ENCODE measurements at regions of chr9 and their contacts with region 1.

Region 1: DNA sequence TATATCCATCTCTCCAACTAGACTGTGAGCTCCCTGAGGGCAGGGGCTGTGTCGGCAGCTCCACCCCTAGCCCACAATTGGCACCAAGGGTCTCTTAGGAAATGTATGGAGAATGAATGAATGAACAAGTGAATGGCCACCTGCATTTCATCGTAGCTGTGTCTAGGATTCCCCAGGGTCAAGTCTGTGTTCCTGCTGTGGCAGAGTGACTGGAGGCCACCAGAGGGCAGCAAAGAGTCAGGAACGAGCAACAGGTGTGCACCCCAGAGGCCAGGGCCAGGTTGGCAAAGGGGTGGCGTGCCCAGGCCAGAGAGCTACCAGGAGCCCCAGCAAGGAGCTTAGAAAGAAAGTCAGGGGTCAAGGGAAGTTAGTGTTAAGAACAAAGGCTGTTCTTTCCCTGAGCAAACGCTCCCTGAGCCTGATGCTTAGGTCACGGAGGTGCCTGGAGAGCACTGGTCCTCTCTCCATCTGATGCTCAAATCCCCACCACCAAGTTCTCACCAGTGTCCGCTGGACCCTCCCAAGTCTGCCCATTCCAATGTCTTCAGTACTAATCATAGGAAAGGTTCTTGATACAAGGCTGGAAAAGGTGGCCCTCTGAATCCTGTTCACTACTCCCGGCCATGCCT is 160.7 kb downstream of the PAX5 start:
- DNase-seq: no peak
- H3K4me3 ChIP-seq: no peak overlapping the region
- H3K27ac ChIP-seq: no peak overlapping the region
- H3K27me3 ChIP-seq: peaks cover 21% of the 10 kb centered on the region
- CTCF ChIP-seq: peak; percentile 88

Region 2: GRCh38 chr9:36690412-36691168 is 182.8 kb before region 1 on chr9:
- CTCF ChIA-PET with region 1: no interaction called
- POLR2A ChIA-PET with region 1: no interaction called
- DNase-seq: no peak
- H3K4me3 ChIP-seq: no peak overlapping the region
- H3K27ac ChIP-seq: no peak overlapping the region
- H3K27me3 ChIP-seq: peaks cover 2% of the 10 kb centered on the region
- CTCF ChIP-seq: no peak

Region 3: DNA sequence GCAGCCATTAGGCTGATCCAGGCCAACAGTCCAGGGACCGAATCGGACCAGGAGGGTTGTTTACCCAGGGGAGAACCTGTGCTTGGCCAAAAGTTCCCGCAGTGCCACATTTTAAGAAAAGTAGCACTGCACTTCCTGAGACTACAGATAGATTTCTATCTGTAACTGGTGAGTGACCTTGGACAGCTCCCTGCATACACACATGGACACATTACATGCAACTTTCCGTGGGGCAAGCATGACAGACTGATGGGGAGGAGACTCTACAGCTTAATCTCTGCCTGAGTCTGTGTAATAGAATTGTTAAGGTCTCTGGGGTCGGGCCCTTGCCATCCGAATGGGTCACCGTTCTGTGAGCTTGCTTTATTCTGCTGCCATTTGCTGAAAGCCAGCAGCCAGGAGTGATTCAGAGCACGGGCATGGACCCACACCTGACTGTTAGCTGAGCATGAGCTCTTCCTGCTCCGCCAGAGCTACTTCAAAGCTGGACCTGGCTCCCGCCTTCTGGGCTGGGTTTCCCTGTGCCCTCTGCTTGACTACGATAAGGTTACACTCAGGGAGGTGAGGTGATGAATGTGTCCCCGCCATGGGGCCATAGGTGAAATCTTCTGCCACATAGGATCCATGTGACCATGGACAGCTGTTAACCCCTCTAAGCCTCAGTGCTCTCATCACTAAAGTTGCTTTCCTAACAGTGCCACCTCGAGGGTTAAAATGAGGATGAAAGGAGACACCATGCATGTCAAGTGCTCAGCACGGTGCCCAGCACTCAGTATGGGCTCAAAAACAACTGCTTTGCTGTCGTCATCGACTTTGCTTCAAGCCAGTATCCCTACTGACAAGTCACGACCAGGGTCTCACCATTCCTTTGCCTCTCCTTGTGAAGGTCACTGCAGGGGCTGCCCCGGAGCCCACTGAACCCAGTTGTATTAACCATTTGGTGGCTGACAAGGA is 100.6 kb before region 1 on chr9:
- CTCF ChIA-PET with region 1: no interaction called
- POLR2A ChIA-PET with region 1: no interaction called
- DNase-seq: no peak
- H3K4me3 ChIP-seq: no peak overlapping the region
- H3K27ac ChIP-seq: no peak overlapping the region
- H3K27me3 ChIP-seq: peaks cover 13% of the 10 kb centered on the region
- CTCF ChIP-seq: no peak

Region 4: DNA sequence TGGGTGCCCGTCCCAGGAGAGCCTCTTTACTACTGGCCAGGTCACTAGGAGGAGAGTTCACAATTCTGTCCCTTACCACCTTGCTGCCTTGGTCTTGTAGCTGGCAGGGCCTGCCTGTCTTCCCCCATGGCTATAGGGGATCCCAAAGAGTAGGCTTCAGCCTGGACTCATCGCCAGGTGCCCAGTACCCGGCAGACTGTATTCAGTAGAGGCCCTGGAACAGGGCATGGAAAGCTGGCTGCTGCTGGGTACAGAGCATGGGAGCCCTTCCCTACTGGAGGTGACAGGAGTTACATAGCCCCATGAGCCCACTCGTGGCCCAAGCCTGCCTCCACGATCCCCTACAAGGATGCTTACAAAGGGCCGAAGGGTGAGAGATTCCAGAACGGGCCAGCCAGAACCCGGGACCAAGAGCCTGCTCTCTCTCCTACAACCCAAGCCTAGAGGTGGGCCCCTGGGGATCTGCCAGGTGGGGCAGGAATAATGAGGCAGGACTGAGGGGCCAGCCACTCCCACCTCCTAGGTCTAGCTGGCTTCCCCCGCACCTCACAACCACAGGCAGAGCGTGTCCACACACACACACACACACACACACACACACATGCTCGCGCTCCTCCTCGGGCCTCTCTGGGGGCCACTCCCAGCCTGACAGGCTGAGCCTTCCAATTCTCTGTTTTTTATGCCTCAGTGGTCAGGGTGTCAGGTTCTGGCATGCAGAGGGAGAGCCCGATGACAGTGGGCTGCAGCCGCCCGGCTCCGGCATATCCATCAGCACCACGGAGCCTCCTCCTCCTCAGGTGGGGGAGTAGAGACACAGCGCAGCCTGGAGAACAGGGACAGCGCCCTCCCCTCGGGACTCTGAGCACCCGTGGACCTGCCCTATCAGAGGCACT is 25.3 kb before region 1 on chr9:
- CTCF ChIA-PET with region 1: no interaction called
- POLR2A ChIA-PET with region 1: no interaction called
- DNase-seq: no peak
- H3K4me3 ChIP-seq: no peak overlapping the region
- H3K27ac ChIP-seq: no peak overlapping the region
- H3K27me3 ChIP-seq: peaks cover 28% of the 10 kb centered on the region
- CTCF ChIP-seq: no peak

Region 5: GRCh38 chr9:36862206-36863145 is 10.9 kb before region 1 on chr9:
- CTCF ChIA-PET with region 1: interaction called, 26 read pairs
- POLR2A ChIA-PET with region 1: no interaction called
- DNase-seq: no peak
- H3K4me3 ChIP-seq: no peak overlapping the region
- H3K27ac ChIP-seq: no peak overlapping the region
- H3K27me3 ChIP-seq: peaks cover 51% of the 10 kb centered on the region
- CTCF ChIP-seq: peak; percentile 80

Region 6: DNA sequence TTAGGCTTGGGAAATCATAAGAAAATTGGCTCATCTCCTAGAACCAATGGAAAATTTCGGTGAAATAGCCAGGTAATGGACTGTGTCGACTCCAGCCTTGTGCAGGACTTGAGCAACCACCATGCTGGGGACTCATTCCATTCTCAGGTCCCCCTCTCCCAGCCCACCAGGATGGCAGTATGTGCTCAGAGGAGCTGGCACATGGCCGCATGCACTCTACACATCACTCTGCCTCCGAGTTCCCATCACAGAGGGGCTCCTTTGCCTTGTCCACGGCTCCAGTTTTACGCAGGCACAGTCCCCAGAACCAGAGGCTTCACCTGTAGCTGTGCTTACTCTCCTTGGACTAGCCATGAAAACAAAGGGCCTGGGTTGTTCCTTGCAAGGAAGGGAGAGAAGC is 11.4 kb after region 1 on chr9:
- CTCF ChIA-PET with region 1: interaction called, 10 read pairs
- POLR2A ChIA-PET with region 1: no interaction called
- DNase-seq: no peak
- H3K4me3 ChIP-seq: no peak overlapping the region
- H3K27ac ChIP-seq: no peak overlapping the region
- H3K27me3 ChIP-seq: peaks cover 33% of the 10 kb centered on the region
- CTCF ChIP-seq: no peak

Region 7: GRCh38 chr9:36891341-36891959 is 18.1 kb after region 1 on chr9:
- CTCF ChIA-PET with region 1: interaction called, 11 read pairs
- POLR2A ChIA-PET with region 1: no interaction called
- DNase-seq: no peak
- H3K4me3 ChIP-seq: no peak overlapping the region
- H3K27ac ChIP-seq: no peak overlapping the region
- H3K27me3 ChIP-seq: peaks cover 29% of the 10 kb centered on the region
- CTCF ChIP-seq: no peak

Region 8: DNA sequence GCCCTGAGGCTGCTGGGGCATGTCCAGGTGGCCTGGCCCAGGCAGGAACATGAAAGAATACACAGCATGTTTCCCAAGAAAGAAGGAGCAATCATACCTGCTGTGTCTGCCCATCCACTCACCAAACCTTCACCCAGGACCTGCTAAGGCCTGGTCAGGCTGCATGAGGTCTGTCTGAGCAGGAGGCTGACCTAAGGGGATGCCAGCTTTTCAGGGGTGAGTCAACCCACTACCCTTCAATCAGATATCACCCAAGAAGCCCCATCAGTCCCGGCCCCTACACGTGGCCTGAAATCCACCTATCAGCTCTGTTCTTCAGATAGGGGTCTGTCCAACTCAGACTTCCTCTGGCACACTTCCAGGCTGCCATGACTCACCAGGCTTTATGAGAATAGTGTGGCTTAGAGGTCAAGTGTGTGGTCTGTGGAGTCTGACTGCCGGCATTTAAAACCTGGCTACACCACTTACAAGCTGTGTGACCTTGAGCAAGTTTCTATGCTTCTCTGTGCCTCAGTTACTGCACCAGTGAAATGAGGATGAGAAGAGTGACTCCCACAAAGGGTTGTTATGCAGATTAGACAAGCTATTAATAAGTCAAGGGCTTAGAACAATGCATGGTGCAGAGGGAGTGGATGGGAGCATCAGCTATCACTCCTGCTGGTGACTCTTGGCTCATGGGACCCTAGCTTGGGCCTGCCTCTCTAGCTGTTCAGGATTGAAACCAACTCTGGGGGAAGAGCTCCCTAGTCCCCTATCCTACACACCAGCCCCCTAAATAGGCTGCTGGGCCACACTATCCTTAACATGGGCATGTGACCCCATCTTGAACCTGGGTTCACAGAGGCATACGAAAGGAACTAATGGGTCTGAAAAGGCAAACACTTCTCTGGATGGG is 30.4 kb after region 1 on chr9:
- CTCF ChIA-PET with region 1: interaction called, 11 read pairs
- POLR2A ChIA-PET with region 1: no interaction called
- DNase-seq: no peak
- H3K4me3 ChIP-seq: no peak overlapping the region
- H3K27ac ChIP-seq: no peak overlapping the region
- H3K27me3 ChIP-seq: peaks cover 46% of the 10 kb centered on the region
- CTCF ChIP-seq: no peak

Region 9: GRCh38 chr9:37329576-37329975 is 456.2 kb after region 1 on chr9:
- CTCF ChIA-PET with region 1: interaction called, 17 read pairs
- POLR2A ChIA-PET with region 1: no interaction called
- DNase-seq: no peak
- H3K4me3 ChIP-seq: no peak overlapping the region
- H3K27ac ChIP-seq: no peak overlapping the region
- H3K27me3 ChIP-seq: no peaks in the 10 kb centered on the region
- CTCF ChIP-seq: peak; percentile 52

Measured in AG04450 (cell line).